ENCODE measurements at regions of chr1 and their contacts with region 1.

Region 1: GRCh38 chr1:227762233-227762911 is 27.1 kb downstream of the SNAP47 start:
- DNase-seq: peak; percentile 89 to 93 (median 92)
- ATAC-seq: peak; percentile 72 to 84 (median 79)
- H3K4me3 ChIP-seq: peak overlapping the region in 3 of 12 donors; percentile 10 to 17 (median 10)
- H3K27ac ChIP-seq: peak overlapping the region in 10 of 12 donors; percentile 22 to 90 (median 67)
- H3K4me1 ChIP-seq: peaks cover 0 to 57% (median 43%) of the 10 kb centered on the region in 12 donors
- H3K27me3 ChIP-seq: no peaks in the 10 kb centered on the region
- CTCF ChIP-seq: peak; percentile 83 to 97 (median 90)
- POLR2A ChIP-seq: no peak

Region 2: GRCh38 chr1:227482023-227482299 is 280.4 kb before region 1 on chr1:
- intact Hi-C with region 1: loop called in 7 of 10 experiments (anchors 1 to 10 kb)
- DNase-seq: no peak
- ATAC-seq: no peak
- H3K4me3 ChIP-seq: no peak overlapping the region
- H3K27ac ChIP-seq: no peak overlapping the region
- H3K4me1 ChIP-seq: no peaks in the 10 kb centered on the region
- H3K27me3 ChIP-seq: peaks cover 0 to 14% (median 0%) of the 10 kb centered on the region in 9 donors
- CTCF ChIP-seq: no peak
- POLR2A ChIP-seq: no peak

Region 3: GRCh38 chr1:227489572-227489971 is 272.8 kb before region 1 on chr1:
- intact Hi-C with region 1: loop called in 6 of 10 experiments (anchors 5 to 10 kb)
- DNase-seq: peak in 2 of 5 donors; percentile 44 to 59
- ATAC-seq: peak; percentile 87 to 95 (median 92)
- H3K4me3 ChIP-seq: no peak overlapping the region
- H3K27ac ChIP-seq: peak overlapping the region in 1 of 12 donors; percentile 37
- H3K4me1 ChIP-seq: peaks cover 0 to 16% (median 1%) of the 10 kb centered on the region in 12 donors
- H3K27me3 ChIP-seq: no peaks in the 10 kb centered on the region
- CTCF ChIP-seq: no peak
- POLR2A ChIP-seq: no peak

Region 4: GRCh38 chr1:227946624-227947385 is 184.4 kb after region 1 on chr1:
- intact Hi-C with region 1: loop called (anchors 1 to 2 kb)
- DNase-seq: peak; percentile 75 to 84 (median 78)
- ATAC-seq: peak; percentile 59 to 79 (median 72)
- H3K4me3 ChIP-seq: peak overlapping the region; percentile 26 to 73 (median 59)
- H3K27ac ChIP-seq: peak overlapping the region in 10 of 12 donors; percentile 34 to 95 (median 89)
- H3K4me1 ChIP-seq: peaks cover 0 to 57% (median 32%) of the 10 kb centered on the region in 12 donors
- H3K27me3 ChIP-seq: peaks cover 0 to 29% (median 0%) of the 10 kb centered on the region in 9 donors
- CTCF ChIP-seq: peak; percentile 62 to 90 (median 82)
- POLR2A ChIP-seq: no peak

Region 5: DNA sequence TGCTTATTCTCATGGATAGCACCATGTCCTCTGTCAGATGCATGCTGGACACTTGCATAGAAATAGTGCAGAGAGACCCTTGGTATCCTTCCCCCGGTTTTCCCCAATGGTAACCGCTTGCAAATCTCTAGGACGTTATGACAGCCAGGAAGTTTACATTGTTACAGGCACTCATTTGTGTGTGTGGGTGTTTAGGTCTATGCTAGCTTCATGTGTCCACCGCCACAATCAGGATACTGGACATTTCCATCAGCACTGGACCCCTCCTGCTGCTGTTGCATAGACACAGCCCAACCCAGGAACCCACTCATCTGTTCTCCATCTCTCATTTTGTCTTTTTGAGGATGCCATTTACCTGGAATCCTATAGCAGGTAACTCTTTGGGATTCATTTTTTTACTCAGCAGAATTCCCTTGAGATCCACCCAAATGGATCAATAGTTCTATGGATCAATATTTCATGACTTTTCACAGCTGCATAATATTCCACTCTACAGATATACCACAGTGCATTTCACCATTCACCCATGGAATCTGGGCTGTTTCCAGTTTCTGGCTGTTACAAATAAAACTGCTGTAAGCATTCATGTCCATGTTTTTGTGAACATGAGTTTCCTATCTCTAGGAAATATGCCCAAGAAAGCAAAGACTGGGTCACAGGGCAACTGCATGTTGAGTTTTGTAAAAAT is 191.9 kb after region 1 on chr1:
- intact Hi-C with region 1: loop called in 1 of 10 experiments (anchors 2 kb)
- DNase-seq: no peak
- ATAC-seq: no peak
- H3K4me3 ChIP-seq: no peak overlapping the region
- H3K27ac ChIP-seq: no peak overlapping the region
- H3K4me1 ChIP-seq: peaks cover 0 to 4% (median 0%) of the 10 kb centered on the region in 12 donors
- H3K27me3 ChIP-seq: peaks cover 0 to 23% (median 0%) of the 10 kb centered on the region in 9 donors
- CTCF ChIP-seq: peak in 2 of 12 donors; percentile 5 to 14
- POLR2A ChIP-seq: no peak

Region 6: DNA sequence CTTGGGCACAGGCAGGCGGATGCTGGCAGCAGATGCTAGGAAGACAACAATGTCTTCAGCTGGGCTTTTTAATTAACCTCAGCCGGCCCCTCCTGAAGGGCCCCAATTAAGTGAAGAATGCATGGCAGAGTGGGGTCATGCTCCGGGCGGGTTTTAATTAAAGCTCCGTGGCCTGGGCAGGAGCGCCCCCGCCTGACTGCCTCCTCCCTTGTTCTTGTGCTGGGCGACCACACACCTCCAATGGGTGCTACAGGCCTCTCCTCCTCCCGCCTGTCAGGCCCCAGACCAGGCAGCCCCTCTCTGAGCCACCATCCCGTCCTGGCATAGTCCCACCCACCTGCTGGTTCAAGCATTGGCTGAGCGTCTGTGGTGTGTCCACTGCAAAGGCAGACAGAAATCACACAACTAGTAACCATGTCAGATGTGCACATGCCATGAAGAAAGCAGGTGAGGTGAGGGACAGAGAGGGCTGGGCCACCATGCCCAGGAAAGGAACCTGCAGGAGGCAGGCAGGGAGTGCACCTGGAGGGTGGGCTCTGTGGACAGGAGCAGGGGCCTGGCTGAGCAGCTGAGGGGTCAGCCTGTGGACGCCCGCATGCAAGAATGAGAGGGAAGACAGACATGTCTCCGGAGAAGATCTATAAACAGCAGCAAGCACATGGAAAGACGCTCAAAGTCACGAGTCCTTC is 311.6 kb after region 1 on chr1:
- intact Hi-C with region 1: loop called in 1 of 10 experiments (anchors 10 kb)
- DNase-seq: peak in 2 of 5 donors; percentile 18 to 25
- ATAC-seq: peak in 3 of 4 donors; percentile 18 to 35 (median 19)
- H3K4me3 ChIP-seq: no peak overlapping the region
- H3K27ac ChIP-seq: no peak overlapping the region
- H3K4me1 ChIP-seq: peaks cover 0 to 4% (median 0%) of the 10 kb centered on the region in 12 donors
- H3K27me3 ChIP-seq: peaks cover 0 to 9% (median 0%) of the 10 kb centered on the region in 9 donors
- CTCF ChIP-seq: peak in 5 of 12 donors; percentile 7 to 28 (median 26)
- POLR2A ChIP-seq: no peak

Region 7: GRCh38 chr1:228082135-228082891 is 319.9 kb after region 1 on chr1 and contains the start of gene ARF1:
- intact Hi-C with region 1: loop called in 3 of 10 experiments (anchors 5 to 10 kb)
- DNase-seq: peak; percentile 93 to 96 (median 93)
- ATAC-seq: peak; percentile 88 to 95 (median 94)
- H3K4me3 ChIP-seq: peak within 1 kb of the TSS; percentile 67 to 100 (median 96)
- H3K27ac ChIP-seq: peak within 1 kb of the TSS; percentile 95 to 100 (median 99)
- H3K4me1 ChIP-seq: peaks cover 27 to 59% (median 48%) of the 10 kb centered on the region in 12 donors
- H3K27me3 ChIP-seq: no peaks in the 10 kb centered on the region
- CTCF ChIP-seq: peak in 6 of 12 donors; percentile 19 to 45 (median 30)
- POLR2A ChIP-seq: peak; percentile 67 to 90
- total RNA-seq, gene ARF1: 271 to 451 (median 310) TPM